ENCODE measurements at regions of chr2 and their contacts with region 1.

Region 1: DNA sequence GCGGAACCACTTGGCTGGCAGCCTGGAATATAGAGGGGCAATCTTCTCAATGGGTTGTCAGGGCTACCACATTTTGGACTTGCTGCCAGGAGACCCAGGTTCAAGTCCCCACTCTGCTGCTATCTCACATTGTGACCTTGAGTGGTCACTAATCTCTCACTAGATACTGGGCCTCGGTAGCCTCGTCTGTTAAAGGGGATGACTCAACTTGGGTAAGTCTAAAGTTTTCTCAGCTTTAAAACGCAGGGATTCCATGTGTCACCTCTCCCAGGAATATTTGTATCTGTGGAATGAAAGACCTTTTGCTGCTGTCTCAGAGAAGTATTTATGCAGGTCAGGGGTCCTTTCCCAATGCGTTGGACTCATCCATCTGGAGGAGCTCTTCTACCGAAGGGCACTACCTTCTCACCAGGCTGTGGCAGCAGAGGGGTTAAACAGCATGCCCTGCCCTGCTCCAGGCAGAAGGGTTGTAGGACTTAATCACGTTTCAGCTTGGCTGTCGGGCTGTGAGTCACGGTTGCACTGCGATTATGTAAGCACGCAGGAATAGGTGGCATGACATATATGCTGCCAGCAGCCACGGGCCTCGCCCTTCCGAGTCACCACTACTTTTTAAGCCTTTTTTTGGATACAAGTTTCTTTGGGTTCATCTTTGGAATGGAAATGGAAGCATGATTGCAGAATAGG is 86.5 kb downstream of the SEMA4F start:
- DNase-seq: peak; percentile 70 to 92
- H3K4me3 ChIP-seq: peak overlapping the region in 1 of 2 donors; percentile 17
- H3K27ac ChIP-seq: peak overlapping the region; percentile 70 to 75
- H3K4me1 ChIP-seq: peaks cover 0 to 12% of the 10 kb centered on the region in 2 donors
- H3K27me3 ChIP-seq: no peaks in the 10 kb centered on the region
- CTCF ChIP-seq: no peak

Region 2: DNA sequence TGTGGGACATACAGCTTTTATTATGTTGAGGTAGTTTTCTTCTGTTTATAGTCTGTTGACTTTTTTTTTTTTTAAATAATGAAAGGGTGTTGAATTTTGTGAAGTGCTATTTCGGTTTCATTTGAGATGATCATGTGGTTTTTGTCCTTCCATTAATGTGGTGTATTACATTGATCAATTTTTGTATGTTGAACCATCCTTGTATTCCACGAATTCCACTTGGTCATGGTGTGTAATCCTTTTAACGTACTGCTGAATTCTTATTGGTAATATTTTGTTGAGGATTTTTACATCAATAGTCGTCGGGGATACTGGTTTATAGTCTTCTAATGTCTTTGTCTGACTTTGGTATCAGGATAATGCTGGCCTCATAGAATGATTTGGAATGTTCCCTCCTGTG is 1336.1 kb before region 1 on chr2:
- intact Hi-C with region 1: no loop called
- DNase-seq: no peak
- H3K4me3 ChIP-seq: no peak overlapping the region
- H3K27ac ChIP-seq: no peak overlapping the region
- H3K4me1 ChIP-seq: no peaks in the 10 kb centered on the region
- H3K27me3 ChIP-seq: no peaks in the 10 kb centered on the region
- CTCF ChIP-seq: no peak

Region 3: DNA sequence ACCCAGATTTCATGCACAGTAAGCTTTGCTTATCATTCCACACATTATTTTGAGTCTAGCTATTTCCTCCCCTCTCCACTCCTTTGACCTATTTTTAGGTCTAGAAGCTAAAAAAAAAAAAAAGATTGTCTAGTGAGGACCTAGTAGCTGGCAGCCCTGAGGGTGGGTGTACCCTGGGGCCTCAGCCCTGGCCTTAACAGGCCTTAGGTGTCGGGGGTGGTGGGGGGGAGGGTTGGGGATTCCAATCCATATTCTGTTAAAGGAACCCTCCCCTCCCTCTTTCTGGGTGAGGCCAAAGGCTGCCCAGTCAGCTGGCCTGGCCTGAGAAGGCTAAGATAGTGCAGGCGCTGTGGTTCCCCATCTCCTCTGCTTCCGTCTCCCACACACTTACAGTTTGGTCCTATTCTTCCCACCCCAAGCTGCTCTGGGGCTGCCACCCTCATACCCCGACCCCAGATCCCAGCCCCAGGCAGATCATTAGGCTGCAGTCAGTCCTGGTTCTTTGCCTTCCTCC is 27.9 kb after region 1 on chr2:
- intact Hi-C with region 1: loop called (anchors 1 kb)
- DNase-seq: no peak
- H3K4me3 ChIP-seq: no peak overlapping the region
- H3K27ac ChIP-seq: peak overlapping the region; percentile 77 to 88
- H3K4me1 ChIP-seq: peaks cover 0 to 18% of the 10 kb centered on the region in 2 donors
- H3K27me3 ChIP-seq: no peaks in the 10 kb centered on the region
- CTCF ChIP-seq: no peak

Region 4: DNA sequence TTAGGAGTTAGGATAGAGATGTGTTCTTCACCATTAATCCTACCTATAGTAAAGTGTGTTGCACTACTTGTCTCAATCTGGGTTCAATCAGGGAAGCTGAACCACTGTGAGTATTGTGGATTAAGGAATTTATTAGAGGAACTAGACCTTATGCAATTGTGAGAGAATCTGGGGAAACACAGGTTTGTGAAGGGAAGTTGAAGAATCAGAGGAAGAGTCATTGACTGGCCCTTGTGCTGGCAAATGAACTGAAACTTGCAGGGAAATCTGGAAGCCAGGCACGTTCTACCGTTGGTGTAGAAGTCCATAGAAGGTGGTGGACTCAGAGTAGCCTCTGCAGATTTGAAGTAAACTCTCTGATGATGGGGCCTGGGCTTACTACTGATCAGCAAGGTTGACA is 48.7 kb after region 1 on chr2:
- intact Hi-C with region 1: no loop called
- DNase-seq: no peak
- H3K4me3 ChIP-seq: no peak overlapping the region
- H3K27ac ChIP-seq: no peak overlapping the region
- H3K4me1 ChIP-seq: no peaks in the 10 kb centered on the region
- H3K27me3 ChIP-seq: no peaks in the 10 kb centered on the region
- CTCF ChIP-seq: no peak